WTC11 (cell line): ENCODE measurements at regions of chr7 and their contacts with region 1.

Region 1: DNA sequence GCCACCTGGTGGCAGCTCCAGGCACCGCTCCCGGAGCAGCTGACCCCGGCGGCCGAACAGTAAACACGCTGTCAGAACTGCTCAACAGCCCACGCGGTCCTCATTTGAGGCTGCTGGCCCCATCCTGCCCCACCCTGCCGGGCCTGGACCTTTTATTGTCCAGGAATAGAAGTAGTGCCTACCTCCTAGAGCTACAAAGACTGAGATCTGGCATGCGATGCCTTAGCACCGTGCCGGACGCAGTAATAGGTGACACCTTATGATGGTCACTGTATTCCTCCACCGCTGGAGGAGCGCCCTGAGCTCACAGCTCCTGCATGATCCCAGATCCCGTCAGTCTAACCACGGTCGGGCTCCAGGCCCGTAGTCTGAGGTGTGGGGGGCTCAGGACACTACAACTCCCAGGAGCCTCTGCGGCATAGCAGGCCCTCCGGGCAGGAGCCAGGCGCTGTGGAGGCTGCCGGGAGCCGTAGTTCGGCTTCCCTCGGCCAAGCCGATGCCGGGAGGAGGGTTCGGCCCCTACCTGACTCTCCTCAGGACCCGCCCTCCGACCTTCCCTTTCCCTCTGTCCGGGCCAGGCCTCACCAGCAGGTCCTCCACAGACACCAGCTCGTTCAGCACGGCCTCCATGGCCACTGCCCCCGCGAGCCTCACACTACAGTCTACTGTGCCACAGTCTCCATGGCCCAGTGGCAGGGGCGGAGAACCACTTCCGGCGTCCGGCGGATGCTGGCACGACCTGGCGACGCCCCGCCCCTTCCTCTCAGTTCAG is at the start of gene FIS1:
- DNase-seq: peak; percentile 95
- ATAC-seq: peak; percentile 93
- H3K4me3 Mint-ChIP-seq: peak within 1 kb of the TSS; percentile 96
- H3K27ac Mint-ChIP-seq: peak within 1 kb of the TSS; percentile 98
- H3K4me1 Mint-ChIP-seq: peaks cover 21% of the 10 kb centered on the region
- H3K27me3 Mint-ChIP-seq: no peaks in the 10 kb centered on the region
- CTCF ChIP-seq: peak; percentile 47
- total RNA-seq, gene FIS1: 121 to 123 TPM (median 122 TPM) in 3 replicates

Region 2: GRCh38 chr7:101066141-101066832 is 178.3 kb before region 1 on chr7:
- CTCF ChIA-PET with region 1: no interaction called
- POLR2A ChIA-PET with region 1: no interaction called
- DNase-seq: no peak
- ATAC-seq: no peak
- H3K4me3 Mint-ChIP-seq: no peak overlapping the region
- H3K27ac Mint-ChIP-seq: no peak overlapping the region
- H3K4me1 Mint-ChIP-seq: peaks cover 9% of the 10 kb centered on the region
- H3K27me3 Mint-ChIP-seq: peaks cover 4% of the 10 kb centered on the region
- CTCF ChIP-seq: no peak

Region 3: DNA sequence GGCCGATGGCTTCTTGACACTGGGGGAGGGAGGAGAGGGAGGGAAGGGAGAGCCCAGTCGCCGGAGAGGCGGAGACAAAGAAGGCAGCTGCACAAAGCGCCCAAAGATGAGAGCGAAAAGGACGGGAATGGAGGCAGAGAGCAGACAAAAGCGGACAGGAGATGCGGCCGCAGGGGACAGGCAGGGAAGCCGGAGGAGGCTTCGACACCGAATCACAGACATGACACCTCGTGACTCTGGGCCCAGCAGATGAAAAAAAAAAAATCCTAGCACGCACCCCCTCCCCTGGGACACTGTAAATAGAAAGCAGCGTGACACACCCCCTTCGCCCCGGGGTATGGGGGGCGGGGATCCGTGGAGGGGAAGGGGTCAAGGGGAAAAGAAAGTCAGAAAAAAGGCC is 65.4 kb before region 1 on chr7:
- CTCF ChIA-PET with region 1: interaction called, 6 read pairs
- POLR2A ChIA-PET with region 1: interaction called, 10 read pairs
- DNase-seq: peak; percentile 43
- ATAC-seq: peak; percentile 4; the same call in 1 of the 2 replicates
- H3K4me3 Mint-ChIP-seq: peak overlapping the region; percentile 73
- H3K27ac Mint-ChIP-seq: no peak overlapping the region
- H3K4me1 Mint-ChIP-seq: peaks cover 18% of the 10 kb centered on the region
- H3K27me3 Mint-ChIP-seq: peaks cover 84% of the 10 kb centered on the region
- CTCF ChIP-seq: no peak

Region 4: DNA sequence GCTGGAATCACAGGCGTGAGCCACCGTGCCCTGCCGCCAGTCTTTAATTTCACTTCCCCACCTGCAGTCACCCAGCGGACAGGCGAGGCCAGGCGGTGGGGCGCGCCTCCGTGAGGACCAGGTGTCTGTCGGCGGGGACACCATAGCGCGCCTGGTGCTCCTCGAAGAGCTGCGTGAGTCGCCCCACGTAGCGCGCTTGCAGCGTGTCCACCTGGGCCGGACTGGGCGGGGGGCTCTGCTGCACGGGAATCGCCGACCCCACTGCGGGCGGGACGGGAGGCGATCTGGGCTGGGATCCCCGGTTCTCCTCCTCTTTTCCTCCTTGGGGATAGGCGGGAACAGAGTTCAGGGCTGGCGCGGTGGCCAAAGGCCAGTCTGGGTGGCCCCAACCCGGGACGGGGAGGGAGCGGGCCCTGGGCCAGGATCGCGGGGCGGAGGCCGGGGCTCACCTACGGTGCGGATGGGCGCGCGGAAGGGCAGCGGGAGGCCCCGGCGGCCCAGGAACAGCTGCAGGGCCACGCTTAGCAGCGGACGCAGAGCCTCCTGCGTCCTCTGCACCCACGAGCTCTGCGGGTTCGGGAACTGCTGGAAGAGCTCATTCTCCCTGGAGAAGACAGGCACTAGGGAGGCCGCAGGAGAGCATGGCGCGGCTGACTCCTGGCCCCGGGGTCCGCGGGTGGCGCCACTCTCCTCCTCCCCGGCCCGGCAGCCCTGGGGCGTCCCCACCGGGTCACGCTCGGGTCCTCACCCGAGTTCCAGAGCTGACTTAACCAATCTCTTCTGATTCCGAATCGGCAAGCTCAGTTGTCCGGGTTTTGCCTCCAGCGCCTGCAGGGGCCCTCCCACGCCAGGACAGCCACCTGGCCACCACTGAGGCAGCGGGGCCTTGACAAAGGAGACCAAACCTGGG is 42.6 kb before region 1 on chr7:
- CTCF ChIA-PET with region 1: interaction called, 11 read pairs
- POLR2A ChIA-PET with region 1: no interaction called
- DNase-seq: peak; percentile 56
- ATAC-seq: peak; percentile 62
- H3K4me3 Mint-ChIP-seq: peak overlapping the region; percentile 72
- H3K27ac Mint-ChIP-seq: no peak overlapping the region
- H3K4me1 Mint-ChIP-seq: peaks cover 28% of the 10 kb centered on the region
- H3K27me3 Mint-ChIP-seq: peaks cover 16% of the 10 kb centered on the region
- CTCF ChIP-seq: no peak

Region 5: DNA sequence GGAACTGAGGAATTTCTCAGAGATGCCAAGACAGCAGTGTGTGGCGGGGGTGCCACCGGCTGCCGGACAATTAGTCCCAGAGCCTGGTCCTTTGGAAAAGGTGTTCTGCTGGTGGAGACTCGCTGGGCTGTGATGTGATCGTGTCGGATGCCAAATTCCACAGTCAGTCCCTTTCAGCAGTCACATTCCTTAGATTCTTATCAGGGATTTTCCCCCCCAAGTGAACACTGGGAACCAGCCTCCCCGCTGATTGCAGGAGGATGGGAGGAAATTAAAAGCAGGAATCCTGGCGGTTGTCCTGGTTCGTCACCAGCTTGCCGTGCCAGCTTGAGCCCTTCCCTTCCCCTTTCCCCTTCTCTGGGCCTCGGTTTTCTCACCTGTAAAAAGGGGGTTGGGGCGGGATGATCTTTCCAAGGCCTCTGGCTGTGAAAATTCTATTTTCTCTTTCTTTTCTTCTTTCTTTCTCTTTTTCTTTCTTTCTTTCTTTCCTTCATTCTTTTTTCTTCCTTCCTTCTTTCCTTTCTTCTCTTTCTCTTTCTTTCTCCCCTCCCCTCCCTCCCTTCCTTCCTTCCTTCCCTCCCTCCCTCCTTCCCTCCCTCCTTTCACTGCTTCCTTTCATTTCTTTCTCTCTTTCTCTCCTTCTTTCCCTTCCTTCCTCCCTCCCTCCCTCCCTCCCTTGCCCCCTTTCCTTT is 157.7 kb after region 1 on chr7:
- CTCF ChIA-PET with region 1: no interaction called
- POLR2A ChIA-PET with region 1: no interaction called
- DNase-seq: peak; percentile 83
- ATAC-seq: peak; percentile 87
- H3K4me3 Mint-ChIP-seq: peak overlapping the region; percentile 35
- H3K27ac Mint-ChIP-seq: peak overlapping the region; percentile 96
- H3K4me1 Mint-ChIP-seq: peaks cover 56% of the 10 kb centered on the region
- H3K27me3 Mint-ChIP-seq: no peaks in the 10 kb centered on the region
- CTCF ChIP-seq: no peak